Common myeloid progenitor, CD34-positive (primary cell): ENCODE measurements at regions of chr6 and their contacts with region 1.

Region 1: GRCh38 chr6:159042003-159042825 is 2.6 kb downstream of the TAGAP start:
- DNase-seq: peak; percentile 94 to 96 (median 96)
- H3K4me3 ChIP-seq: peak overlapping the region in 6 of 7 experiments; percentile 81 to 99 (median 96)
- H3K27ac ChIP-seq: peak overlapping the region; percentile 98 to 99
- H3K4me1 ChIP-seq: peaks cover 64 to 73% (median 67%) of the 10 kb centered on the region in 4 experiments
- H3K27me3 ChIP-seq: no peaks in the 10 kb centered on the region

Region 2: GRCh38 chr6:158869826-158870648 is 172.2 kb before region 1 on chr6:
- CTCF ChIA-PET with region 1: no interaction called
- POLR2A ChIA-PET with region 1: no interaction called
- DNase-seq: peak; percentile 98 to 99 (median 99)
- H3K4me3 ChIP-seq: peak overlapping the region in 6 of 7 experiments; percentile 31 to 80 (median 54)
- H3K27ac ChIP-seq: peak overlapping the region; percentile 69 to 92
- H3K4me1 ChIP-seq: peaks cover 5 to 16% (median 13%) of the 10 kb centered on the region in 4 experiments
- H3K27me3 ChIP-seq: peaks cover 0 to 2% (median 0%) of the 10 kb centered on the region in 5 experiments

Region 3: DNA sequence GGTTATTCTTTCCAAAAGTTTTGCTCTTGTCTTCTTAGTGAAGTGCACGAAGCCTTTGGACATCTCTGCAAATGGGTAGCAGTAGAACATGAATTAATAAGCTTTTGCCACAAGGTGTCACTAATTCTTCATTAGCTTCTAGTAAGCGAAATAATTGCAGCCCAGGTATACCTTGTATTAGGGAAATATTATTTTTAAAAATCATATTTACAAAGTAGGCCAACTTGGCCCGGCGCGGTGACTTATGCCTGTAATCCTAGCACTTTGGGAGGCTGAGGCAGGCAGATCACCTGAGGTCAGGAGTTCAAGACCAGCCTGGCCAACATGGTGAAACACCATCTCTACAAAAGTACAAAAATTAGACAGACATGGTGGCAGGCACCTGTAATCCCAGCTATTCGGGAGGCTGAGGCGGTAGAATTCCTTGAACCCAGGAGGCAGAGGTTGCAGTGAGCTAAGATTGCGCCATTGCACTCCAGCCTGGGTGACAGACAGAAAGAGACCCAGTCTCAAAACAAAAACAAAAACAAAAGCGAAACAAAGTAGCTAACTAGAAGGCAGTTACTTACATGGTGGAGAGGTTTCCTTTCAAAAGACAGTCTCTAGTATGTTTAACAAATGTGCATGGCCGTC is 33.4 kb before region 1 on chr6:
- CTCF ChIA-PET with region 1: interaction called, 126 read pairs
- POLR2A ChIA-PET with region 1: interaction called, 3 read pairs
- DNase-seq: peak; percentile 61 to 73 (median 64)
- H3K4me3 ChIP-seq: peak overlapping the region in 1 of 7 experiments; percentile 20
- H3K27ac ChIP-seq: no peak overlapping the region
- H3K4me1 ChIP-seq: peaks cover 2 to 15% (median 9%) of the 10 kb centered on the region in 4 experiments
- H3K27me3 ChIP-seq: no peaks in the 10 kb centered on the region

Region 4: GRCh38 chr6:159062564-159062945 is 20.3 kb after region 1 on chr6:
- CTCF ChIA-PET with region 1: interaction called, 11 read pairs
- POLR2A ChIA-PET with region 1: no interaction called
- DNase-seq: peak in 2 of 3 donors; percentile 79 to 83
- H3K4me3 ChIP-seq: peak overlapping the region in 1 of 7 experiments; percentile 26
- H3K27ac ChIP-seq: peak overlapping the region in 1 of 2 experiments; percentile 50
- H3K4me1 ChIP-seq: peaks cover 17 to 47% (median 22%) of the 10 kb centered on the region in 4 experiments
- H3K27me3 ChIP-seq: no peaks in the 10 kb centered on the region

Region 5: GRCh38 chr6:159094444-159095252 is 52.4 kb after region 1 on chr6:
- CTCF ChIA-PET with region 1: interaction called, 15 read pairs
- POLR2A ChIA-PET with region 1: no interaction called
- DNase-seq: peak in 2 of 3 donors; percentile 39 to 53
- H3K4me3 ChIP-seq: no peak overlapping the region
- H3K27ac ChIP-seq: peak overlapping the region in 1 of 2 experiments; percentile 47
- H3K4me1 ChIP-seq: peaks cover 7 to 33% (median 28%) of the 10 kb centered on the region in 4 experiments
- H3K27me3 ChIP-seq: no peaks in the 10 kb centered on the region

Region 6: DNA sequence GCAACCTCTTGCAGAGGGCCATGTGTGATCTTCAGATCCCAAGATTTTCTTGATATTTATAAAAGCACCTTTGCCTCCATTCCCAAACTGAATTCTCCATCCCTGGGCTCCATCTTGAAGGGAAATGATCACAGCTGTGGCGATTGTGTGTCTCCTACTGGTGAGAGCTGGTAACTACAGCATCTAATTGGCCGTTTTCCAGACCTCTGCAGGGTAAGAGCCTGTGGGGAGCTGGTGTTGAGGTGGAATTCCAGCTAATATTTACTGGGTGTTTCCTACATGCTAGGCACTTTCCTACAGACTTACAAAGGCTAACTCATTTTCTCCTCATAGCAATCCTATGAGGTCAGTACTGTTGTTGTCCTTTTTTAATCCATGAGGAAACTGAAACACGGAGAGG is 67.8 kb after region 1 on chr6:
- CTCF ChIA-PET with region 1: interaction called, 109 read pairs
- POLR2A ChIA-PET with region 1: interaction called, 8 read pairs
- DNase-seq: peak; percentile 58 to 70 (median 59)
- H3K4me3 ChIP-seq: no peak overlapping the region
- H3K27ac ChIP-seq: no peak overlapping the region
- H3K4me1 ChIP-seq: peaks cover 17 to 57% (median 29%) of the 10 kb centered on the region in 4 experiments
- H3K27me3 ChIP-seq: no peaks in the 10 kb centered on the region